ENCODE measurements at regions of chr5 and their contacts with region 1.

Region 1: DNA sequence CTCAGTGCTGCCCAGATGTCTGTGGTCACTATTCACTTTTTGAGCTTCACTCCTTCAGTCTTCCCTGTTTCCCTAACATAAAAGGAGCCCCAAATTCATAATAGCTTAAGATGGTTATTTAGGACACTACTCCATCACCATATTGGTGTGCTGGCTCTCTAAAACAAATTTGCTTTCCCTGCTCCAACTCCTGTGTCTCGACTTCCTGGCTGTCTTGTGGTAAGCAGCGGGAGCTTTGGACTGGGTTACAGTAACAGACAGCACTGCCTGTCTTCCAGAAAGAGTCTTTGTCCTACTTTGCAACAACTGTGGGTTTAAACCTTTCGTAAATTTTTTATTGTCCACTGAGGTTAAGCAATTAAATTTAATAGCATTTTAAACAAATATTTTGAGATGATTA is 389.4 kb downstream of the CDH9 start:
- DNase-seq: peak; percentile 21
- ATAC-seq: peak; percentile 98
- H3K4me3 ChIP-seq: no peak overlapping the region
- H3K27ac ChIP-seq: 0 out of 2 replicates have a peak overlapping the region, but pooled peaks have one; percentile 13
- H3K4me1 ChIP-seq: peaks cover 11% of the 10 kb centered on the region; the same call in 1 of the 2 replicates
- H3K27me3 ChIP-seq: no peaks in the 10 kb centered on the region
- CTCF ChIP-seq: no peak

Region 2: DNA sequence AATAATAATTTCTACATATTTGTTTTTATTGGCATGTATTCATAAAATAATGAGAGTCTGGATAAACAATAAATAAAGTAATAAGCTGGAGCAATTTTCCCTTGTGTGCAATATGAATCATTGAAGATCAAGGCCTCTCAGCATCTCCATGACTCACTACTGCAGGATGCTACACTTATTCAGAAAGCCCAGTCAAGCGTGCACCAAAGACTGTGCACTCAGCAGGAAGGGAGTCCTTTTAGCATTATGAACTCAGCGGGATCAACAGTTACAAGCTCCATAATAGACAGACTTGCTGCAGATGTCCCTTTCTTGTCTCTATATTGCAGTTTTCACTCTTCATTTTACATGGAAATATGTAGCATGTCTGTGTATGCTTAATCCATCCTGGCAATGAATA is 95.9 kb before region 1 on chr5:
- CTCF ChIA-PET with region 1: no interaction called
- POLR2A ChIA-PET with region 1: no interaction called
- intact Hi-C with region 1: loop called (anchors 1 kb)
- DNase-seq: peak; percentile 91
- ATAC-seq: peak; percentile 100
- H3K4me3 ChIP-seq: no peak overlapping the region
- H3K27ac ChIP-seq: no peak overlapping the region
- H3K4me1 ChIP-seq: peaks cover 3% of the 10 kb centered on the region; the same call in 1 of the 2 replicates
- H3K27me3 ChIP-seq: no peaks in the 10 kb centered on the region
- CTCF ChIP-seq: no peak

Region 3: GRCh38 chr5:26578002-26578401 is 71.0 kb before region 1 on chr5:
- CTCF ChIA-PET with region 1: no interaction called
- POLR2A ChIA-PET with region 1: no interaction called
- intact Hi-C with region 1: loop called (anchors 2 kb)
- DNase-seq: no peak
- ATAC-seq: peak; percentile 57
- H3K4me3 ChIP-seq: no peak overlapping the region
- H3K27ac ChIP-seq: no peak overlapping the region
- H3K4me1 ChIP-seq: peaks cover 9% of the 10 kb centered on the region
- H3K27me3 ChIP-seq: no peaks in the 10 kb centered on the region
- CTCF ChIP-seq: no peak

Region 4: DNA sequence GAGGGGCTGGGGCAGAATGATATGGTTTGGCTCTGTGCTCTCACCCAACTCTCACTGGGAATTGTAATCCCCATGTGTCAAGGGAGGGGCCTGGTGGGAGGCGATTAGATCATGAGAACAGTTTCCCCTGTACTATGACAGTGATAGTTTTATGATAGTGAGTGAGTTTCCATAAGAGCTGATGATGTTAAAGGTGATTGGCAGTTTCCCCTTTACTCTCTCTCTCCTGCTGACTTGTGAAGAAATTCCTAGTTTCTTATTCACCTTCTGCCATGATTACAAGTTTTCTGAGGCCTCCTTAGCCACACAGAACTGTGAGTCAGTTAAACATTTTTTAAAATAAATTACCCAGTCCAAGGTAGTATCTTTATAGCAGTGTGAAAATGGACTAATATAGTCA is 509.8 kb after region 1 on chr5:
- CTCF ChIA-PET with region 1: no interaction called
- POLR2A ChIA-PET with region 1: no interaction called
- intact Hi-C with region 1: no loop called
- DNase-seq: no peak
- ATAC-seq: no peak
- H3K4me3 ChIP-seq: no peak overlapping the region
- H3K27ac ChIP-seq: no peak overlapping the region
- H3K4me1 ChIP-seq: no peaks in the 10 kb centered on the region
- H3K27me3 ChIP-seq: no peaks in the 10 kb centered on the region
- CTCF ChIP-seq: no peak